ENCODE measurements at regions of chr10 and their contacts with region 1.

Region 1: DNA sequence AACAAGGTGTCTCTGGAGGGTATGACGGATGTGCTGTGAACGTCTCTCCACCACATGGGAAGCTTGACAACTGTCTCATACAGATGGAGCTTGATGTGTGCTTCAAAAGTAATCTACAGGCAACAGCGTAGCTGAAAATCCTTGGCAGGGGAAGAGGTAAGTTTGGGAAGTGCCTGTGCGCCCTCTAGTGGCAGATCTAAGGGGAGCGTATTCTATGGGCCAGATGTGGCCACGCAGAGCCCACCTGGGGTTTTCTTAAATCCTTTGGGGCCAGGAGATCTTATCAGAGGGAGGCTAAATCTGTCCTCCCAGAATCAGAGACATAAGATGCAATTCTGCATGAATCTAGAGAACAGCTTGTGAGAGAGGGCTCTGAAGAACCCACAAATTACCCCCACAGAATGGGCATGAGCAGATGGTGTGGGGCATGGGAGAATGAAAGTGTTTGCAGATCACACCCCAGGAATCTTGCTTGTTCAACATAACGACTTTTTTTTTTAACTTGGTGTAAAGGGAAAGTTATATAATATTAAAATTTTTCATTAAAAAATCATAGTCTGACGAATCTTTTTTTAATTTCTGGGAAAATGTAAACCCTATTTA is 91.2 kb upstream of the MPP7 start:
- DNase-seq: peak; percentile 48
- H3K4me3 ChIP-seq: no peak overlapping the region
- H3K27ac ChIP-seq: no peak overlapping the region
- H3K4me1 ChIP-seq: no peaks in the 10 kb centered on the region
- H3K27me3 ChIP-seq: no peaks in the 10 kb centered on the region
- CTCF ChIP-seq: peak; percentile 92 to 97

Region 2: GRCh38 chr10:27742195-27743011 is 651.7 kb before region 1 on chr10:
- CTCF ChIA-PET with region 1: no interaction called
- dilution Hi-C with region 1: no loop called
- in situ Hi-C with region 1: loop called in 1 of 2 experiments (anchors 25 kb)
- intact Hi-C with region 1: loop called (anchors 5 kb)
- DNase-seq: peak; percentile 63
- H3K4me3 ChIP-seq: peak overlapping the region; percentile 41 to 47 (median 43)
- H3K27ac ChIP-seq: no peak overlapping the region
- H3K4me1 ChIP-seq: peaks cover 26% of the 10 kb centered on the region
- H3K27me3 ChIP-seq: peaks cover 48% of the 10 kb centered on the region
- CTCF ChIP-seq: peak; percentile 35 to 60

Region 3: GRCh38 chr10:28291881-28292297 is 102.2 kb before region 1 on chr10:
- CTCF ChIA-PET with region 1: no interaction called
- dilution Hi-C with region 1: no loop called
- in situ Hi-C with region 1: no loop called
- intact Hi-C with region 1: no loop called
- DNase-seq: peak; percentile 90
- H3K4me3 ChIP-seq: no peak overlapping the region
- H3K27ac ChIP-seq: peak overlapping the region; percentile 85
- H3K4me1 ChIP-seq: peaks cover 16% of the 10 kb centered on the region
- H3K27me3 ChIP-seq: no peaks in the 10 kb centered on the region
- CTCF ChIP-seq: no peak

Region 4: DNA sequence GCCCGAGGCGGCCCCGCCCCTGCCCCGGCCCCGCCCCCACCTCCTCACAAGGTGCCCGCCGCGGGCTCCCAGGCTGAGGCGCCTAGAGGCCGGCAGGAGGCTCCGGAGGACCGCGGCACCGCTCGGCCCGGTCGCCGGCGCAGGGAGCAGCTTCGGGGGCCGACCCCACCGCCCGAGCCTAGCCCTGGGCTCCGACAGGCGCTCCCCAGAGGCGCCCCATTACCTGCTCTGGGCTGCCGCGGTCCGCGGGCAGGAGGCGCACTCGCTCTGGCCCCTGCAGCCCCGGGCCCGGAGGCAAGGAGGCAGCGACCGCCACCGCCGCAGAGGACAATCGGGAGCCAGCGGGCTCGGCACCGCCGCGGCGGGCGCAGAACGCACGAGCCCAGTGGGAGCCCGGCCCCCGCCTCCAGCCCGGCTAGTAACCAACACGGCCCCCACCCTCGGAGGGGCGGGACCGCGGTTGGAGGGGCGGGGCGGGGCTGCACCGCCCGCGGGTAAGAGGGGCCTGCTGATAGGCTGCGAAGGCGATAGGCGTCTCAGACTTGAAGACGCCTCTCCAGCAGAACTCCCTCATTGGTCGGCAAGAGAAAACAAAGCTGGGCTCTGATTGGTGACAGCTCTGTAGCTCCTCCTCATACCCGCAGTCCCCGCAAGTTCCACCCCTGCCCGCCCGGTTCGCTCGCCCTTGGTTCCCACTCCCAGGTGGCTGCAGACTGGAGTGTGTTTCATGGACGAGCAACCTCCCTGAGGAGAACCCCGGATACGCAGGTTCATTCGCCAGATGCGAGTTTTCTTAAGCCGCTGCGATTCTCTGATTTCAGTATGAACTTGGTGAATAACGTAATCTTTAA is 91.2 kb before region 1 on chr10 and contains the start of gene MPP7:
- CTCF ChIA-PET with region 1: interaction called, 5 read pairs
- dilution Hi-C with region 1: loop called (anchors 5 kb)
- in situ Hi-C with region 1: no loop called
- intact Hi-C with region 1: no loop called
- DNase-seq: peak; percentile 99
- H3K4me3 ChIP-seq: peak within 1 kb of the TSS; percentile 72 to 97 (median 84)
- H3K27ac ChIP-seq: peak within 1 kb of the TSS; percentile 53
- H3K4me1 ChIP-seq: peaks cover 8% of the 10 kb centered on the region
- H3K27me3 ChIP-seq: no peaks in the 10 kb centered on the region
- CTCF ChIP-seq: peak in 1 of 2 donors; percentile 40
- total RNA-seq, gene MPP7: 10.0 to 23.0 TPM

Region 5: DNA sequence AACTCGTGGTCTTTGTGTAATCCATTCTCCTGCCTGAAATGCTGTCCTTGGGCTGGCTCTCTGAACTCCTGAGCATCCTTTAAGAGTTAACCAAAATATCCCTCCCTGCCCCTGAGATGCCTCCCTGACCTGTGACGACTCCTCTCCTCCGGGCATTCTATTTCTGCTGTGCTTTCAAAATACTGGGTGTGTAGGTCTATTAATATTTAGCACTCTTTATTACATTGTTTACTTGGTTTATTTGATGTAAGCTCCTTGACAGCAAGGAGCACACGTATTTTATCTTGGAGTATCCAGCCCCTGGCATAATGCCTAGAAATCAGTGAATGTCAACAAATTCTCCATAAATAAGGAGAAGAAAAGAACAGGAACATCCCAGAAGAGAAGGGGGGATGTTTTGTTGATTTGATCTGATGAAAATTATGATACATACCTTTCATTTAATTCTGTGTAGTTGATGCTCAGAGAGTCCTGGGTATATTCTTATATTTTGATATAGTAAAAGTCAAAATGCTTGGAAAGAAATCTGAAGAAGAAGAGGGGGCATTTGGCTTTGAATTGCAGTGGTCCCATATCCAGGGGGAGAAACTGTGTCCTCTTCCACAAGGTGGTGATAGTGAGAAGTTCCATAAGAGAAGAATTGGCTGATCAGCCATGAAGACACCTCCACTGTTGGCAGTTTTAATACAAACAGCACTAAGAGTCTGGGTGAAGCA is 16.5 kb after region 1 on chr10:
- CTCF ChIA-PET with region 1: interaction called, 25 read pairs
- dilution Hi-C with region 1: no loop called
- in situ Hi-C with region 1: no loop called
- intact Hi-C with region 1: no loop called
- DNase-seq: no peak
- H3K4me3 ChIP-seq: no peak overlapping the region
- H3K27ac ChIP-seq: no peak overlapping the region
- H3K4me1 ChIP-seq: no peaks in the 10 kb centered on the region
- H3K27me3 ChIP-seq: peaks cover 3% of the 10 kb centered on the region
- CTCF ChIP-seq: peak in 1 of 2 donors; percentile 17

Region 6: GRCh38 chr10:28444031-28444430 is 50.0 kb after region 1 on chr10:
- CTCF ChIA-PET with region 1: no interaction called
- dilution Hi-C with region 1: no loop called
- in situ Hi-C with region 1: no loop called
- intact Hi-C with region 1: no loop called
- DNase-seq: no peak
- H3K4me3 ChIP-seq: no peak overlapping the region
- H3K27ac ChIP-seq: no peak overlapping the region
- H3K4me1 ChIP-seq: no peaks in the 10 kb centered on the region
- H3K27me3 ChIP-seq: no peaks in the 10 kb centered on the region
- CTCF ChIP-seq: no peak